ENCODE measurements at regions of chr16 and their contacts with region 1.

Region 1: DNA sequence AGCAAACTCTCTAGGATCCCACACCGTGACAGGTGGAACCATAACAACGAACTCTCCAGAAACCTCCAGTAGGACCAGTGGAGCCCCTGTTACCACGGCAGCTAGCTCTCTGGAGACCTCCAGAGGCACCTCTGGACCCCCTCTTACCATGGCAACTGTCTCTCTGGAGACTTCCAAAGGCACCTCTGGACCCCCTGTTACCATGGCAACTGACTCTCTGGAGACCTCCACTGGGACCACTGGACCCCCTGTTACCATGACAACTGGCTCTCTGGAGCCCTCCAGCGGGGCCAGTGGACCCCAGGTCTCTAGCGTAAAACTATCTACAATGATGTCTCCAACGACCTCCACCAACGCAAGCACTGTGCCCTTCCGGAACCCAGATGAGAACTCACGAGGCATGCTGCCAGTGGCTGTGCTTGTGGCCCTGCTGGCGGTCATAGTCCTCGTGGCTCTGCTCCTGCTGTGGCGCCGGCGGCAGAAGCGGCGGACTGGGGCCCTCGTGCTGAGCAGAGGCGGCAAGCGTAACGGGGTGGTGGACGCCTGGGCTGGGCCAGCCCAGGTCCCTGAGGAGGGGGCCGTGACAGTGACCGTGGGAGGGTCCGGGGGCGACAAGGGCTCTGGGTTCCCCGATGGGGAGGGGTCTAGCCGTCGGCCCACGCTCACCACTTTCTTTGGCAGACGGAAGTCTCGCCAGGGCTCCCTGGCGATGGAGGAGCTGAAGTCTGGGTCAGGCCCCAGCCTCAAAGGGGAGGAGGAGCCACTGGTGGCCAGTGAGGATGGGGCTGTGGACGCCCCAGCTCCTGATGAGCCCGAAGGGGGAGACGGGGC is 1.3 kb downstream of the SPN start:
- DNase-seq: peak in 9 of 10 donors; percentile 36 to 77 (median 54)
- ATAC-seq: peak; percentile 44 to 49
- H3K4me3 Mint-ChIP-seq: peak overlapping the region; percentile 93 to 99 (median 96)
- H3K27ac Mint-ChIP-seq: peak overlapping the region; percentile 94 to 100 (median 97)
- H3K4me1 Mint-ChIP-seq: peaks cover 39 to 77% (median 69%) of the 10 kb centered on the region in 4 donors
- H3K27me3 Mint-ChIP-seq: peaks cover 0 to 3% (median 0%) of the 10 kb centered on the region in 5 donors

Region 2: DNA sequence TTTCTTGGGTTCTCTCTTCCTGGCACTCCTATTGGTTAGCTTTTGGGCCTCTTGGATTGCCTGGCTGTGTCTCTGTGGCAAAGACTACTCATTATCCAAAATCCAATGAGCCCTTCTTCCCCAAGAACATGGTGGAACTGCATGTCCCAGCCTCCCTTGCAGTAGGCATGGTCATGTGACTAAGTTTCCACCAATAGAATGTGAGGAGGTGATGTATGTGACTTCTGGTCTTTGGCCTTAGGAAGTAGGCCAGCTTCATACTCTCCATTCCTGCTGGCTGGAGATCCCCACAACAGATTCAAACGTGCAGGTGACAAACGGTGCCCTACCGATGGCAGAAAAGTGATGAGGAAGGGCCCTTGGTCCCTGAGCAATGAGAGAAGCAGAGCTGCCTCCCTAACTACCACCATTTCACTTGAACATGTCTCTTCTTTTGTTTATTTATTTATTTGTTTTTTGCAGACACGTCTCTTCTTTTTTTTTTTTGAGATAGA is 18.6 kb before region 1 on chr16:
- POLR2A ChIA-PET with region 1: interaction called, 11 read pairs
- DNase-seq: no peak
- ATAC-seq: no peak
- H3K4me3 Mint-ChIP-seq: peak overlapping the region in 1 of 10 donors; percentile 38
- H3K27ac Mint-ChIP-seq: peak overlapping the region in 4 of 10 donors; percentile 23 to 47 (median 40)
- H3K4me1 Mint-ChIP-seq: peaks cover 20 to 45% (median 30%) of the 10 kb centered on the region in 4 donors
- H3K27me3 Mint-ChIP-seq: no peaks in the 10 kb centered on the region

Region 3: GRCh38 chr16:29676989-29677785 is 12.9 kb after region 1 on chr16:
- POLR2A ChIA-PET with region 1: interaction called, 10 read pairs
- DNase-seq: no peak
- ATAC-seq: no peak
- H3K4me3 Mint-ChIP-seq: no peak overlapping the region
- H3K27ac Mint-ChIP-seq: peak overlapping the region in 6 of 10 donors; percentile 26 to 81 (median 55)
- H3K4me1 Mint-ChIP-seq: peaks cover 7 to 38% (median 23%) of the 10 kb centered on the region in 4 donors
- H3K27me3 Mint-ChIP-seq: no peaks in the 10 kb centered on the region

Region 4: DNA sequence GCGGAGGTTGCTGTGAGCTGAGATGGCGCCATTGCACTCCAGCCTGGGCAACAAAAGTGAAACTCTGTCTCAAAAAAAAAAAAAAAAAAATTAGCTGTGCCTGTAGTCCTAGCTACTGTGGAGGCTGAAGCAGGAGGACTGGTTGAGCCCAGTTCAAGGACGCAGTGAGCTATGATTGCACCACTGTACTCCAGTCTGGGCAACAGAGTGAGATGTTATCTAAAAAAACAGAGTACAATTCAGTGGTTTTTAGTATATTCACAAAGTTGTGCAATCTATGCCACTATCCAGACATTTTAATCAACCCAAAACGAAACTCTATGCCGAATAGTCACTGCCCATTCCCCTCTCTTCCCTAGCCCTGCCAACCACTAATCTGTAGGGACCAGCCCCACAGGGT is 56.4 kb after region 1 on chr16:
- POLR2A ChIA-PET with region 1: no interaction called
- DNase-seq: no peak
- ATAC-seq: no peak
- H3K4me3 Mint-ChIP-seq: no peak overlapping the region
- H3K27ac Mint-ChIP-seq: peak overlapping the region in 4 of 10 donors; percentile 15 to 81 (median 70)
- H3K4me1 Mint-ChIP-seq: peaks cover 9 to 23% (median 20%) of the 10 kb centered on the region in 4 donors
- H3K27me3 Mint-ChIP-seq: no peaks in the 10 kb centered on the region

Measured in naive thymus-derived CD8-positive, alpha-beta T cell (primary cell).